ENCODE measurements at regions of chr5 and their contacts with region 1.

Region 1: GRCh38 chr5:147956064-147956841 is 49.9 kb upstream of the C5orf46 start:
- DNase-seq: peak; percentile 58
- H3K4me3 Mint-ChIP-seq: no peak overlapping the region
- H3K27ac Mint-ChIP-seq: no peak overlapping the region
- H3K4me1 Mint-ChIP-seq: peaks cover 18% of the 10 kb centered on the region
- H3K27me3 Mint-ChIP-seq: no peaks in the 10 kb centered on the region
- CTCF ChIP-seq: no peak

Region 2: GRCh38 chr5:148002466-148002865 is 46.2 kb after region 1 on chr5:
- CTCF ChIA-PET with region 1: interaction called, 6 read pairs
- POLR2A ChIA-PET with region 1: interaction called, 11 read pairs
- intact Hi-C with region 1: no loop called
- DNase-seq: peak; percentile 97
- H3K4me3 Mint-ChIP-seq: no peak overlapping the region
- H3K27ac Mint-ChIP-seq: peak overlapping the region; percentile 73
- H3K4me1 Mint-ChIP-seq: peaks cover 19% of the 10 kb centered on the region
- H3K27me3 Mint-ChIP-seq: no peaks in the 10 kb centered on the region
- CTCF ChIP-seq: no peak

Region 3: GRCh38 chr5:148011401-148012132 is 55.3 kb after region 1 on chr5:
- CTCF ChIA-PET with region 1: interaction called, 3 read pairs
- POLR2A ChIA-PET with region 1: interaction called, 14 read pairs
- intact Hi-C with region 1: no loop called
- DNase-seq: peak; percentile 97
- H3K4me3 Mint-ChIP-seq: no peak overlapping the region
- H3K27ac Mint-ChIP-seq: peak overlapping the region; percentile 43
- H3K4me1 Mint-ChIP-seq: peaks cover 27% of the 10 kb centered on the region
- H3K27me3 Mint-ChIP-seq: no peaks in the 10 kb centered on the region
- CTCF ChIP-seq: no peak

Region 4: DNA sequence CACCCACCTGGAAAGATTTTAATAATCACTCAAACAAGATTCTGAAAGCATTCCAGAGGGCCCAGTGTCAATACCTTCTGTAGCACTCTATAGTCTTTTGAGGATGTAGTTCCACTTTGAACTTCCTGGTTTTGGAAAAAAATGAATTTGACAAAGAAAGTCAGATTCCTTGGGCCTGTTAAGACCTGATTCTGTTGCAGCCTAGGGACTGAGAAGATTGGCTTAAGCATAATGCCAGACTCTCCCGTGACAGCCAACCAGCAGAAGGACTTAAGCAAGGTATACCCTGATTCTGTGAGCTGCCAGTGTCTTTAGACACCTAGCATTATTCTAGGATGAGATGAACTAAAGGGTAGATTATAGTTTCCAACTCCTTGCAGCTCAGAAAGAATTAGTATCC is 114.4 kb after region 1 on chr5:
- CTCF ChIA-PET with region 1: interaction called, 4 read pairs
- POLR2A ChIA-PET with region 1: interaction called, 11 read pairs
- intact Hi-C with region 1: no loop called
- DNase-seq: no peak
- H3K4me3 Mint-ChIP-seq: no peak overlapping the region
- H3K27ac Mint-ChIP-seq: no peak overlapping the region
- H3K4me1 Mint-ChIP-seq: peaks cover 12% of the 10 kb centered on the region
- H3K27me3 Mint-ChIP-seq: no peaks in the 10 kb centered on the region
- CTCF ChIP-seq: no peak

Region 5: GRCh38 chr5:148090773-148091221 is 134.5 kb after region 1 on chr5:
- CTCF ChIA-PET with region 1: interaction called, 3 read pairs
- POLR2A ChIA-PET with region 1: interaction called, 18 read pairs
- intact Hi-C with region 1: no loop called
- DNase-seq: peak; percentile 67
- H3K4me3 Mint-ChIP-seq: peak overlapping the region; percentile 63
- H3K27ac Mint-ChIP-seq: peak overlapping the region; percentile 93
- H3K4me1 Mint-ChIP-seq: peaks cover 14% of the 10 kb centered on the region
- H3K27me3 Mint-ChIP-seq: no peaks in the 10 kb centered on the region
- CTCF ChIP-seq: no peak

Region 6: DNA sequence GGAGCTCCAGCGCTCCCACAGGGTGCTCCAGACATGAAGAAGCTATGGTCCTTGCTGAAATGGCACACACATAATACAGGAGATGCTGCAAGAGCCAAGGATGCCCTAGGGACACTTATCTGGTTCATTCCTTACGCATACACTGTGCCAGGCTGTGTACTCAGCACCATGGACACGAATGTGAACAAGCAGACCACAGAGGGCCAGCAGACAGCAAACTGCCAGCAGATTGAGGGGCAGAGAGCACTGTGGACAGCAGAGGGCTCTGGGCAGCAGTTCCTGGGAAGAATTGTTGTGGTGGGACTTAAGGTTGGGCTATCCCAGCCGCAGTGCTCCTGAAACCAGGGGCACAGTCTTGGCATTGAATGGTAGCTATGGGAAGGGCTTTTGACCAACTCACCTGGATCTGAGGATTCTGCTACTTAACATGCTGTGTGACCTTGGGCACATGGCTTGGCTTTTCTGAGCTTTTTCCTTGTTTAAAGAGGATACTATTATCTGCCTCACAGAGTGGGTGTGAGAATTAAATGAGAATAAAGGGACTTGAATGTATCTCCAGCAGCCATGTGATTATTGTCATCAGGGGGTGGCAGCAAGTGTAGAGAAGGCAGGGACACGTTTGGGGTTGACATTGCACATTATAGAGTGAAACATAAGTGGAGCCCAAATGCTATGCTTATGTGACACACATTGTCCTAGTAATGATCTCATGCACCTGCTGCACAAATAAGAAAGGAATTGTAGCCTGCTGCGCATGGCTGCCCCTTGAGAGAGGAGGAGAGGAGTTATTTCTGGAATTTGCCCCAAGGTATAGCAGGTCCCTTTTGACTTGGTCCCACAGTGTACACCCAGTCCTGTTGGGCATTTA is 1804.0 kb after region 1 on chr5:
- CTCF ChIA-PET with region 1: no interaction called
- POLR2A ChIA-PET with region 1: no interaction called
- intact Hi-C with region 1: no loop called
- DNase-seq: no peak
- H3K4me3 Mint-ChIP-seq: no peak overlapping the region
- H3K27ac Mint-ChIP-seq: no peak overlapping the region
- H3K4me1 Mint-ChIP-seq: peaks cover 22% of the 10 kb centered on the region
- H3K27me3 Mint-ChIP-seq: no peaks in the 10 kb centered on the region
- CTCF ChIP-seq: no peak